ENCODE measurements at regions of chrX and their contacts with region 1.

Region 1: DNA sequence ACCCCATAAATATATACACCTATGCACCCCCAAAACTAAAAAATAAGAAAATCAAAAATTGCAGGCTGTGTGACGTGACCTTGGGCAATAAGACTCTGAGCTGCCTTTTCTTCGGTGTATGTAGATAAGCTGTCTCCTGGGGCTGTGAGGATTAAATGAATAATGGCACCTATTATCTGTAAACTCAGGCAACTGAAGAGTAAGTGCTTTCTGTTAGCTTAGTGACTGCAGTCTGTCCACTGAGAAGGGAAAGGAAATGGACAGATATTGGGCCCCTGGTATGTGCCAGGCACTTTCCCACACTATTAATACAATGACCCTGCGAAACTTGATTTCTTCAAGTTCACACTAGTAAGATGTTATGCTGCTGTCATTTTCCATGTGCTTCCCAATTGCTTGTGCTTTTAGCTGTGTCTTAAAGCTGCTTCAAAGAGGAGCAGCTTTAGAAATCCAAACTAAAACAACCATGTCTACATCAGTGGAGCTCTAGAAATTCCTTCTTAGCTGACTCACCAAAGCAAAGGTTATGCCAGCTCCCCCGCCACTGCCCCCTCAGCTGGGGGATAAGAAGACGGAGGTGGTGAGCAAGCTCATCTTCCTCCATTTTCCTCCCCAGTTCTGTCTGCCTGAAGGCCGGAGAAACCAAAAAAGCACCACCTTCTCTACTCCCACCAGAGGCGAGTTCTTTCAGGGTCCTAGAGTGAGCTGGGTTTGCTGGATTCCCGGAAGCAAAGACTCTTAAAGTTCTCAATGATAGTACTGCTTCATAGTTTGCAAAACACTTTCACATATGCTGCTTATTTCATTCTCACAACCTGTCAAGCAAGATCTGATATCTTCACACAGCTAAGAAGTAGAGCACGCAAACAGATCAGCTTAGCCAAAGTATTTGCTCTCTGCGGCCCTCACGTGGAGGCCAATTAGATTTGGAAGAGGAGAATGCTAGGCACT is 8.8 kb upstream of the DGAT2L6 start:
- DNase-seq: peak; percentile 25 to 29
- H3K4me3 ChIP-seq: no peak overlapping the region
- H3K4me3 Mint-ChIP-seq: peak overlapping the region; percentile 61
- H3K27ac Mint-ChIP-seq: peak overlapping the region; percentile 82
- H3K4me1 ChIP-seq: peaks cover 14% of the 10 kb centered on the region
- H3K4me1 Mint-ChIP-seq: no peaks in the 10 kb centered on the region
- H3K27me3 ChIP-seq: no peaks in the 10 kb centered on the region
- H3K27me3 Mint-ChIP-seq: no peaks in the 10 kb centered on the region
- CTCF ChIP-seq: no peak

Region 2: DNA sequence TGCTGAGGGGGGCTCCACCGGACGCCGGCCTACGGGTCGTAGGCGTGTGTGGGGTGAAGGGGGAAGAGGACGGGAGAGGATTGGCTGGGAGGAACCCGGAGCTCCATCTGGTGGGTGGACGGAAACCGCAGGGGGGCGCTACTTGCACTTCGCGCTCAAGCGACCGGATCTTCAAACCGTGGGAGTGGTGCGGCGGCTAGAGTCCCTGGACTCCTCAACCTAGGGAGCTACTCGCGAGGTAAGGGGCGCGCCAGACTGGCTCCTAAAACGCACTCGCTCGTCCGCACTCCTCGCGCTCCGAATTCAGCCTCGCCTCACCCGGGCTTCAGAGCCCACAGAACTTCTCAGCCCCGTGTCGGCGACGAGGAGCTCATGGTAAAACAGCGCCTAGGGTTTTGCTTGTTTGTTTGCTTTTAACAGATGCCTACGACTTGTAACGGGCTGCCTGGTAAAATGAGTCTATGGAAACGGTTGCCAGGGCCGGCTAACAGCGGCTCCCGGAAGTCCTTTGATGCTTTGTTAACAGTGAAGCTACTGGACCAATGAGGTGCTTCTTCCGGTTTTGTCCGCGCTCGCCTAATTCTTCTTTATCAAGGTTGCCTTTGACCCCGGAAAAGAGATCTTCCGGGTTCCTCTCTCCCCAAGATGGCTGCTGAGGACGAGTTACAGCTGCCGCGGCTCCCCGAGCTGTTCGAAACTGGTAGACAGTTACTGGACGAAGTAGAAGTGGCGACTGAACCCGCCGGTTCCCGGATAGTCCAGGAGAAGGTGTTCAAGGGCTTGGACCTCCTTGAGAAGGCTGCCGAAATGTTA is 35.0 kb before region 1 on chrX and contains the start of gene IGBP1:
- CTCF ChIA-PET with region 1: interaction called, 9 read pairs
- POLR2A ChIA-PET with region 1: interaction called, 19 read pairs
- intact Hi-C with region 1: no loop called
- DNase-seq: peak; percentile 85
- H3K4me3 ChIP-seq: peak within 1 kb of the TSS; percentile 68
- H3K4me3 Mint-ChIP-seq: peak within 1 kb of the TSS; percentile 99
- H3K27ac Mint-ChIP-seq: peak within 1 kb of the TSS; percentile 100
- H3K4me1 ChIP-seq: no peaks in the 10 kb centered on the region
- H3K4me1 Mint-ChIP-seq: no peaks in the 10 kb centered on the region
- H3K27me3 ChIP-seq: no peaks in the 10 kb centered on the region
- H3K27me3 Mint-ChIP-seq: no peaks in the 10 kb centered on the region
- CTCF ChIP-seq: peak; percentile 51 to 57
- total RNA-seq, gene IGBP1: 41.6 and 44.7 TPM in 2 replicates

Region 3: GRCh38 chrX:70354716-70355115 is 186.2 kb after region 1 on chrX:
- CTCF ChIA-PET with region 1: no interaction called
- POLR2A ChIA-PET with region 1: no interaction called
- intact Hi-C with region 1: no loop called
- DNase-seq: no peak
- H3K4me3 ChIP-seq: no peak overlapping the region
- H3K4me3 Mint-ChIP-seq: no peak overlapping the region
- H3K27ac Mint-ChIP-seq: no peak overlapping the region
- H3K4me1 ChIP-seq: no peaks in the 10 kb centered on the region
- H3K4me1 Mint-ChIP-seq: no peaks in the 10 kb centered on the region
- H3K27me3 ChIP-seq: no peaks in the 10 kb centered on the region
- H3K27me3 Mint-ChIP-seq: no peaks in the 10 kb centered on the region
- CTCF ChIP-seq: no peak

Measured in Caco-2 (cell line).